Pancreas (tissue), 10 donors: ENCODE measurements at regions of chr11 and their contacts with region 1.

Region 1: GRCh38 chr11:133531971-133532651 is at the start of gene OPCML:
- DNase-seq: no peak
- ATAC-seq: no peak
- H3K4me3 ChIP-seq: no peak within 1 kb of the TSS
- H3K27ac ChIP-seq: no peak within 1 kb of the TSS
- H3K4me1 ChIP-seq: no peaks in the 10 kb centered on the region
- H3K27me3 ChIP-seq: peaks cover 0 to 3% (median 0%) of the 10 kb centered on the region in 4 donors
- CTCF ChIP-seq: no peak
- total RNA-seq, gene OPCML: 0.05 to 0.31 (median 0.19) TPM

Region 2: GRCh38 chr11:133476570-133477255 is 55.4 kb before region 1 on chr11:
- intact Hi-C with region 1: loop called in 1 of 3 experiments (anchors 10 kb)
- DNase-seq: no peak
- ATAC-seq: no peak
- H3K4me3 ChIP-seq: no peak overlapping the region
- H3K27ac ChIP-seq: no peak overlapping the region
- H3K4me1 ChIP-seq: no peaks in the 10 kb centered on the region
- H3K27me3 ChIP-seq: no peaks in the 10 kb centered on the region
- CTCF ChIP-seq: no peak

Region 3: GRCh38 chr11:133582750-133583149 is 50.6 kb after region 1 on chr11:
- intact Hi-C with region 1: no loop called
- DNase-seq: no peak
- ATAC-seq: no peak
- H3K4me3 ChIP-seq: no peak overlapping the region
- H3K27ac ChIP-seq: no peak overlapping the region
- H3K4me1 ChIP-seq: no peaks in the 10 kb centered on the region
- H3K27me3 ChIP-seq: no peaks in the 10 kb centered on the region
- CTCF ChIP-seq: no peak